ENCODE measurements at regions of chr12 and their contacts with region 1.

Region 1: DNA sequence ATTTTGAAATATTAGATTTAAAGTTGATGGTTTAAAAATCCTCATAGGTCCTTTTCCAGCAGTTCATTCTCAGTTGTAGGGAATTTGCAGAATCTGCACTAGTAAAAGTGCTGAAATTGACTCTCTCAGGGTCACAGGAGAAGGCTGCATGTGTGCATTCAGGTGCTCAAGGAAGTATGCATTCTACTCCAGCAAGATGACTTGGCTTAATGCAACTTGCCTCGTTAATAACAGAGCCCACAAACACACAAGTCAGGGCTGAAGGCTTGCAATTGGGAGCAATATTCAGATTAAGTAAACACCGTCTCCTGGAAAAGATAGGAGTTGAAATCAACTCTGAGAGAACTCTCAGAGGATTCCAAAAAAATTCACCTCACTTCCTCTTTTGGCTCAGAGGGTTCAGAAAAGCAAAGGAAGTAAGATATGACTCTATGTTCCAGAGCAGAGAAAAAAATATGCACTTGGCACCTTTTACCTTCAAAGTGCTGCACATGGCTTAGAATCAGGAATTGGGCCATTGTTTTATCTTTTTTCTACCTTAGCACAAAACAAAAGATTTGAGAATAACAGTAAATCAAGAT is 406.3 kb upstream of the DCN start:
- DNase-seq: no peak

Region 2: GRCh38 chr12:92561543-92561899 is 972.6 kb after region 1 on chr12:
- intact Hi-C with region 1: loop called (anchors 10 kb)
- DNase-seq: no peak